ENCODE measurements at regions of chr9 and their contacts with region 1.

Region 1: DNA sequence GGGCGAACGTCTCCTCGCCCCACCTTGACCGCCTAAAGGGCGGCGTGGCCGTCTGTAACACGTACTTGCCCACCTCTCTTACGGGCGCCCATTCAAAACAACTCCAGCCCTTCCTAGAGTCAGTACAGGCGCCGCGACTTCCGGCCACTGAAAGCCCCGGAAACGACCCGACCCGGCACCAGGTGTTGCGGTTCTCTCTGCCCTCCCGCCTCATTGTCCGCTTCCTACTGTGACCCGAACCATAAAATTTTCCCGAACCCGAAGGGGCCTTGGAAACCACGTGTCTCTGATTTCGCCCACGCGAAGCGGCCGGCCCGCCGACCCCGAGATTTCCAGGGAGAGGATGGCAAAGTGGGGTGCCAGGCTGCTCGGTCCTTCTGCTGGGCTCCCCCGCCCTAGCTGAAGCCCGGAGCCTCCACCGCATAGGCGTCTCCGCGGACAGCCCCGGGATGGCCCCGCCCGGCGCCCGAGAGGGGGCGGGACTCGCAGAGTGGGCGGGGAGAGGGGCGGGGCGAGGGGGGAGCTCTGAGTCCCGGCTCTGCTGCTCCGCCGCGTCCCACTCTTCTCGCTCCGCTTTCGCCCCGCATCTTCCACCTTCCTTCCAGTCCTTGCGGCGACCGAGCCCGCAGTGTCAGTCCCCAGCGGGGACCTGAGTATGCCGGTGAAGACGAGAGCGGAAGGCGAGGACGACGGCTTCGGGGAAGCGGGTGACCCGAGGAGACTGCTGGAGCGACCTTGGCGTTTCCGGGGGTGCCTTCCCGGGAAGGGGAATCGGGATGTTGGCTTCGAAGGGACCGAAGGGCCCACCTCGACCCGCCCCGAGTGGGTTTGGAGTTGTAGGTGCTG is 684 bp upstream of the PTGES2 start:
- DNase-seq: peak; percentile 89 to 90
- H3K4me3 ChIP-seq: peak overlapping the region; percentile 96
- H3K4me3 Mint-ChIP-seq: peak overlapping the region; percentile 97
- H3K27ac Mint-ChIP-seq: peak overlapping the region; percentile 100
- H3K4me1 ChIP-seq: peaks cover 9% of the 10 kb centered on the region; the same call in 1 of the 2 replicates
- H3K4me1 Mint-ChIP-seq: peaks cover 10% of the 10 kb centered on the region
- H3K27me3 ChIP-seq: no peaks in the 10 kb centered on the region
- H3K27me3 Mint-ChIP-seq: no peaks in the 10 kb centered on the region
- CTCF ChIP-seq: no peak

Region 2: DNA sequence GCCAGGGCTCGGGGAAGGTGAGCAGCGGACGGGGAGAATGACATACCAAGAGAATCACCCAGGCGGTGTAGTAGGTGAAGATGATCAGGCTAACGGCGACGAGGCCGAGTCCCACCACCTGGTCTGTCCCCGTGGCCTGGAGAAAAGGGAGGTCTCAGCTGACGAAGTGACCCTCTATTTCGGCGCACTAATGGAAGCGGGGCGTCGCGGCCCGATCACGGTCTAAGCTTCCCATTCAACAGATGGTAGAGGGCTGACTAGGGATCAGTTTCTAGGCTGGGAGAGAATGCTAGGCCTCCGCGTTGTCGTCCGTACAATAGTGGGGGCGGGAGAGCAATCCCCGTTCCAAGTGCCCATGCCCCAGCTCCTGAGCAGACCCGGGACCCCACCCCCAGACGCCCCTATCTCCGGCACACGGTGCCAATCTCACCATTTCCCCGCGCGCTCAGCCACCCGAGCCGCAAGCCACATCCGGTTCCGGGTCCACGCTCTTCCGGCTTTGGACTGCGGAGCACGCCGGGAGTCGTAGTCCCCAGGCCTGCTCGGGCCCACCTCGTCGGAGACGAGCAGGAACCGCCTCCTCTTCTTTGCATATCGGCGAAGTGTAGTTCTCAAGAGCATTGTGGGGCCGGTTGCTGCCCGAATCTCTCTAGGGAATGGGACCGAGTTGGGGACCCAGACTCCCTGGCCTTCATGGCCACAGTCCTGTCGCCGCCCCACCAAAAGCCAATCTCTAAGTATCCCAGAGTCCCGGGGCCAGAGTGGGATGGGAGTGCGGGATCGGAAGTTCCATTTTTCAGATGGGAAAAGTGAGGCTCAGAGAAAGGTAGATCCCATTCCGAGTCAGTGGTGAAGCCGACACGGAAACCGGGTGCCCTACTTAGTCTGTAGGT is 190.6 kb before region 1 on chr9 and contains the start of gene DPM2:
- CTCF ChIA-PET with region 1: no interaction called
- POLR2A ChIA-PET with region 1: no interaction called
- intact Hi-C with region 1: no loop called
- DNase-seq: peak; percentile 83
- H3K4me3 ChIP-seq: peak within 1 kb of the TSS; percentile 78
- H3K4me3 Mint-ChIP-seq: peak within 1 kb of the TSS; percentile 82
- H3K27ac Mint-ChIP-seq: peak within 1 kb of the TSS; percentile 88
- H3K4me1 ChIP-seq: 0 out of 2 replicates have a peak, but pooled peaks cover 4% of the 10 kb centered on the region
- H3K4me1 Mint-ChIP-seq: peaks cover 15% of the 10 kb centered on the region
- H3K27me3 ChIP-seq: no peaks in the 10 kb centered on the region
- H3K27me3 Mint-ChIP-seq: no peaks in the 10 kb centered on the region
- CTCF ChIP-seq: no peak
- total RNA-seq, gene DPM2: 38.7 and 39.4 TPM in 2 replicates

Region 3: GRCh38 chr9:128106181-128106890 is 21.9 kb before region 1 on chr9:
- CTCF ChIA-PET with region 1: no interaction called
- POLR2A ChIA-PET with region 1: no interaction called
- intact Hi-C with region 1: no loop called
- DNase-seq: peak in 1 of 2 experiments; percentile 35
- H3K4me3 ChIP-seq: no peak overlapping the region
- H3K4me3 Mint-ChIP-seq: no peak overlapping the region
- H3K27ac Mint-ChIP-seq: no peak overlapping the region
- H3K4me1 ChIP-seq: peaks cover 16% of the 10 kb centered on the region
- H3K4me1 Mint-ChIP-seq: peaks cover 18% of the 10 kb centered on the region
- H3K27me3 ChIP-seq: no peaks in the 10 kb centered on the region
- H3K27me3 Mint-ChIP-seq: no peaks in the 10 kb centered on the region
- CTCF ChIP-seq: peak in 1 of 2 experiments; percentile 11

Region 4: GRCh38 chr9:128159784-128160602 is 31.8 kb after region 1 on chr9 and contains the start of gene BBLN:
- CTCF ChIA-PET with region 1: interaction called, 4 read pairs
- POLR2A ChIA-PET with region 1: interaction called, 5 read pairs
- intact Hi-C with region 1: loop called (anchors 2 kb)
- DNase-seq: peak; percentile 96 to 98
- H3K4me3 ChIP-seq: peak within 1 kb of the TSS; percentile 58
- H3K4me3 Mint-ChIP-seq: peak within 1 kb of the TSS; percentile 81
- H3K27ac Mint-ChIP-seq: peak within 1 kb of the TSS; percentile 86
- H3K4me1 ChIP-seq: peaks cover 8% of the 10 kb centered on the region; the same call in 1 of the 2 replicates
- H3K4me1 Mint-ChIP-seq: no peaks in the 10 kb centered on the region
- H3K27me3 ChIP-seq: no peaks in the 10 kb centered on the region
- H3K27me3 Mint-ChIP-seq: no peaks in the 10 kb centered on the region
- CTCF ChIP-seq: no peak
- total RNA-seq, gene BBLN: 34.2 and 36.5 TPM in 2 replicates

Region 5: DNA sequence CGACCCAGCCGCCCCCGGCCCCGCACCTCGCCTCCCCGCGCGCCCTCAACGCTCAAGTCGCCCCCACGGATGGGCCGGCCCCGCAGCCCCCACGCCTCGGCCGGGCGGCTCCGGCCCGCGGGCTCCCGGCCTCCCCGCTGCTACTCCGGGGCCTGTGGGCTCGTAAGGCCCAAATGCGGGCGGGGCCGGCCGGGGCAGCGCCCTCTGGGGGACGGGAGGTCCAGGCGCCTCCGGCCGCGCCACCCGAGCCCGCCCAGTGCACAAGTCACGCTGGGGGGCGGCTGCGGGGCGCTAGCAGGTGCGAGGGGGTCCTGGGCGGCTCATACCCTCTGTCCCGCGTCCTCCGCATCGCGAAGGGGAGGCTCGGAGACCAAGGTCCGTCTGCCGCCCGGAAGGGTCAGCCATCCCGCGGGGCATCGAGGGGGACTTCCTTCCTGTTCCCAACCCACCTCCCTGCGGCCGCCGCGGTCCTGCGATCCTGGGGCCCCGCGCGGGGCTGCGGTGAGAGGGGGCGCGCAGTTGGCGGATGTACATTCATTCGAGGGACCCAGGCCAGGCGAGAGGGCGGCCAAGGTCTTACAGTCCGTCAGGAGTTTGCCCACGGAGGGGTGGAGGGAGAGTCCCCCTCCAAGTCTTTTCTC is 63.3 kb after region 1 on chr9 and contains the start of gene CIZ1:
- CTCF ChIA-PET with region 1: no interaction called
- POLR2A ChIA-PET with region 1: interaction called, 3 read pairs
- intact Hi-C with region 1: loop called (anchors 5 kb)
- DNase-seq: peak; percentile 74 to 88
- H3K4me3 ChIP-seq: peak within 1 kb of the TSS; percentile 98
- H3K4me3 Mint-ChIP-seq: peak within 1 kb of the TSS; percentile 89
- H3K27ac Mint-ChIP-seq: peak within 1 kb of the TSS; percentile 96
- H3K4me1 ChIP-seq: 0 out of 2 replicates have a peak, but pooled peaks cover 7% of the 10 kb centered on the region
- H3K4me1 Mint-ChIP-seq: peaks cover 8% of the 10 kb centered on the region
- H3K27me3 ChIP-seq: no peaks in the 10 kb centered on the region
- H3K27me3 Mint-ChIP-seq: no peaks in the 10 kb centered on the region
- CTCF ChIP-seq: peak; percentile 61 to 79
- total RNA-seq, gene CIZ1: 154 and 187 TPM in 2 replicates

Region 6: DNA sequence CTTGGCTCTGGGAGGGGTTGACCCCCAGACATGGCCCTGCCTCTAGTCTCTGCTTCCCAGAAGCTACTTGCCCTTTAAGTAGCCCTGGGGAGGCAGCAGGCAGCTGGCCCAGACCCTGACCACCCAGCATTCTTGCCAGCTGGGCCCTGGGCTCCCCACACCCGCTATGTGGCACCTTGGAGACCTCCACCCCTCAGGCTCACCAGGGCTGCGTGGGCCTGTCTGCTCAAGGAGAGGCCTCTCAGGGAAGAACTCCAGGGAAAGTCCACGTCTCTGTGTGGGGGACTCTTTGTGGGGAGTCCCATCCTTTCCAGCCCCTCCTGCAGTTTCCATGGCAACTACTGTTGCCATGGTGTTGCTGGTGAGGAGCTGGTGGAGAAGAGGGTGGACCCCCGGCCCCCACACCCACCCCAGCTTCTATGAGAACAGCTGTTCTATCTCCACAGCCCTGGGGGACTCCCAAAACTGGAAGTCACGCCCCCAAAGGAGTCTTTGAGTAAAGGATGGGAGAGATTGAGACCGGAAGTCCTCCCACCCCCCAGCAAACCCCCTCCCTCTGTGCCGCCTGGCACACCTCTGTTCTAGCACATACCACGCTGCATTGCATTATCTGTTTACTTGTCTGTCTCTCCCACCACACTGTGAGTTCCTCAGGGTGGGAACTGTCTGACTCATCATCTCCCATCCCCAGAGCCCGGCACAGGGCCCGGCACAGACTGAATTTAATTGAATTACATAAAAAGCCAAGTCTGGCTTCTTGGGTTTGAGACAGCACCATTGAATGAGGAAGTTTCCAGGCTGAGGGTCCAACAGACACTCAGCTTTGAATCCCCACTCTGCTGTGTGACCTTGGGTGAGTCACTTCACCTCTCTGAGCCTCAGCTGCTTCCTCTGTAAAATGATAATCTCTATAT is 87.5 kb after region 1 on chr9:
- CTCF ChIA-PET with region 1: no interaction called
- POLR2A ChIA-PET with region 1: no interaction called
- intact Hi-C with region 1: no loop called
- DNase-seq: no peak
- H3K4me3 ChIP-seq: no peak overlapping the region
- H3K4me3 Mint-ChIP-seq: no peak overlapping the region
- H3K27ac Mint-ChIP-seq: no peak overlapping the region
- H3K4me1 ChIP-seq: peaks cover 15% of the 10 kb centered on the region
- H3K4me1 Mint-ChIP-seq: peaks cover 20% of the 10 kb centered on the region
- H3K27me3 ChIP-seq: no peaks in the 10 kb centered on the region
- H3K27me3 Mint-ChIP-seq: peaks cover under 1% of the 10 kb centered on the region
- CTCF ChIP-seq: no peak

Measured in Caco-2 (cell line).